HAP-1 (cell line): ENCODE measurements at regions of chr13 and their contacts with region 1.

Region 1: DNA sequence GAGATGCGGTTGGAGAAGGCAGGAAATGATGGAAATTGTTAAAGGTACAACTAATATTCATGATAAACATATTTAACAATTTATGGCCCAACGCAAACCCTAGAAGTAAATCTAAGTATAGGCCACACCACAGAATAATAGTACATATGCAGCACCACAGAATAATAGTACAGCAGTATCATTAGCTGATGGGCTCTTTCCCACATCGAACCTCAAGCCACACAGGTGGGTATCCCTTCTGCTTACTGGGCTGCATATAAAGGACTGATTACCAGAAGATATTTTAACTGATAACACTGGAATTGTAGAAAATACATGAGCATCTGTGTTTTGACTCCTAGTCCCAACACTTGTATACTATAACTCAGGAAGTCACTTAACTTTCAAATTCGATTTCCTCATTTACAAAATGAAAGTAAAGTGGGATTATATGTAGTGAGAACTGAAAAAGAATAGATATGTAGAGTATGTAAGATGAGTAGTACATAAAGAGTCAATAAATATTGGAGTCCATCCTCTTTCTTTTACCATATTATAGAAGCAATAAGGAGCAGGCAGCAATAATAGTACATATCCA is 91.5 kb downstream of the TSC22D1 start:
- DNase-seq: no peak
- H3K4me3 ChIP-seq: no peak overlapping the region
- H3K4me1 ChIP-seq: no peaks in the 10 kb centered on the region
- H3K27me3 ChIP-seq: no peaks in the 10 kb centered on the region

Region 2: DNA sequence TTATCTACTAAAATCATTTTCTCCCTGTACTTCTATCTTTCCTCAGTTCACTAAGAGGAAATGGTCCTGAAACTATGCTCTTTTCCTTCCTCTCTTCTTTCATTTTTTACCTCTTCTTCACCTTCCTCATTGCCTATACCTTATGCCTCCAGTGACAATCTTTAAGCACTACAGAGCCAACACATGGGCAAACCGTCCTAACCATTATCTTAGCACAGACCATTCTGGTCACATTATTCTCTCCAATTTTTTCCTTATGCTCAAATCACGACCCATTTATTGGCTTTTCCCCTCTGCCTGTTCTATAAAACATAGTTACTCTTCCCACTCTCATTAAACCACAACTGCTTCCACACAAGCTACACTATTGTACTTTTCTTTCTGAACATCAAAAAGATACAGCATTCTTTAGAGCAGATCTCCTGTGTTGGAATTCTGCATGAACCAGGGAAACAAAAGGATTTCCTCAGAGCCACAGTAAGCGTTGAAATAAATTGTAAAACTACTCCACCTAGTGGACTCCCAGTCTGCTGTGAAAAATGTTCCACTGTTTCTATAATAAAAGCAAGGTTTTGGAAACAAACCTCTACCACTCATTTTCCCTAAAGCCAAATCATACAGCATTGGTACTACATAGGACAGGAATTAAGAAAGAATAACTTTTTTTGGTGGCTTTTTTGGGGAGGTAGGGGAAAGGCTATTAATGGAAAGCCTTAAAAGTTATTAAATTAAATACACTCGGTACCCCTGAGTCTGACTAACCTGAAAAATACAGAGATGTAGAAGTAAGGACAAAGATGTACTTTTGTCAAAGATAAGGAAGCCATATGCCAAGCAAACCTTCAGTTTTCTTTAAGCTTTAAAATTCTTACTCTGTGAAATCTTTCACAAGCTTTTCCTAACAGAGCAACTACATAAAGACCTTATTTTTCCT is 485.2 kb after region 1 on chr13:
- in situ Hi-C with region 1: loop called (anchors 10 kb)
- DNase-seq: peak; percentile 31 to 82
- H3K4me3 ChIP-seq: no peak overlapping the region
- H3K4me1 ChIP-seq: peaks cover 10% of the 10 kb centered on the region
- H3K27me3 ChIP-seq: no peaks in the 10 kb centered on the region

Region 3: DNA sequence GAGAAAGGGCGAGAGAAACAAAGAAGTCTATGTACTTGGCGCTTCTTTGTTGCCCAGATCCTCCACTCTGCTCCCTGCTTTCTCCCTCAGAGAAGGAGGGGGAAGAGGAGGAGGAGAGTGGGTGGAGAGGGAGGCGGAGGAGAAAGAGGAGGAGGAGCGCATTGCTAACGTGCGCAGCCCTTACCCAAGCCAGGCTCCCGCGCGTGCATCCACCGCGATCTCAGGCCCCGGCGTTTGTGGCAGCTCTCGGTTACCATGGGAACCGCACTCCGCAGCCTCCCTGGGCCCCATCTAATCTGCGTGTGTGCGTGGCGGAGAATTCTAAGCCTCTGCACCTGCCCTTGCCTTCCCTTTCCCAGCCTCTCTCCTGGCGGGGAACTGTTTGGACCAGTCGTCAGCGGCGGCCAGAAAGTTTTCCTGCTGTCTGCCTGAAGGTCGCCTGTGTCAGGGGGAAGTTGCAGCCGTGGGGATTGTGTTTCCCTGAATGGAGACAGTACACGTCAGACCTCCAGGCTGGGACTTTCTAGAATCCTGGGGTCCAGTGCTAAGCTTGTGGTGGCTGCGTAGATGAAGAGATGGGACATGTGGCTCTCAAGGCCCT is 1131.0 kb after region 1 on chr13 and contains the start of gene ERICH6B:
- in situ Hi-C with region 1: no loop called
- DNase-seq: peak; percentile 71 to 82
- H3K4me3 ChIP-seq: peak within 1 kb of the TSS; percentile 7; the same call in 1 of the 2 replicates
- H3K4me1 ChIP-seq: peaks cover 3% of the 10 kb centered on the region; the same call in 1 of the 2 replicates
- H3K27me3 ChIP-seq: peaks cover 24% of the 10 kb centered on the region